Endothelial cell of umbilical vein (primary cell): ENCODE measurements at regions of chr12 and their contacts with region 1.

Region 1: DNA sequence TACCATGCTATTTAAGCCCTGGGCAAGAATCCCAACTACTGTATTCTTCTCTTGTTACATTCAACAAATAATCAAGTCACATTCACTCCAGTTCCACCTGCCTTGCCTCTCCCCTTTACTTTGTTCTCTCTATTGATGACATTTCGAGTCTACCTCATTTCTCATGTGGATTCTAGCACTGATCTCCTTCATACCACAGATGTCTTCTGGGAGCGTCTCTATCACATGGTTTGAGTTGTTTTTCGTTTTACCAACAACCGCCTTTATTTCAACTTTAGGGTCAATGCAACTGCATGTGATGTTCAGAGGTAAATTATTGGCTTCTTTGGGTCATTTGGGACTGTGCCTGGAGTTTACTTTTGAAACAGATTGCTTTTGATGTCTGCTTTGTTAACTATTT is 40.7 kb downstream of the OTOGL start:
- DNase-seq: no peak
- H3K4me3 ChIP-seq: no peak overlapping the region
- H3K27ac ChIP-seq: no peak overlapping the region
- H3K4me1 ChIP-seq: no peaks in the 10 kb centered on the region
- H3K27me3 ChIP-seq: peaks cover 0 to 5% of the 10 kb centered on the region in 2 experiments
- CTCF ChIP-seq: no peak
- POLR2A ChIP-seq: no peak

Region 2: DNA sequence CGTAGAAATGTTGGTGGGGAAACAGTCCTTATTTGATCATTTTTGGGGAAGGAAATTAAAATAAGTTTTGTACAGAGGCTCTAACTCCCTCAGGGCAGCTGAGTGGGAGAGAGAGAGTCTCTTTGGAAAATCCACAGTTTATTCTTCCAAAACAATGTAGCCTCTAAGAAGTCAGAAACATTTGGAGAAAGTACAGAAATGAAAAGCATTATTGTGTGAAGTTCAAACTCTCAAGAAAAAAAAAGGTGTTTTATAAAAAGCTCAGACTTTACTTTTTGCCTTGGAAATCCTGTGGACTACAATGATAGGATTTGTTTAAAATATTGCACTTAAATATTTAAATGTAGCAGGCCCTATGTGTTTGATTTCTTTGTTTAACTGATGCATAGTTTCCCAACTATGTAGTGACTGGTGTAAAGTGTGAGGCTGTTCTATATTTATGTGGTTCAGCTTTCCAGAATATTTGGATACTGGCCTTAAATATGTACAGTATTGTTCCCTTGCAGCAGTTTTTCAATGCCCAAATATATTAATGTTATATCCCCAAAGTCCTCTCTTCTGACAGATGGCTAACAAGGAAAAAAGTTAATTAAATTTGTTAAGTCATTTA is 122.6 kb before region 1 on chr12:
- CTCF ChIA-PET with region 1: no interaction called
- POLR2A ChIA-PET with region 1: no interaction called
- dilution Hi-C with region 1: no loop called
- intact Hi-C with region 1: no loop called
- DNase-seq: no peak
- H3K4me3 ChIP-seq: no peak overlapping the region
- H3K27ac ChIP-seq: no peak overlapping the region
- H3K4me1 ChIP-seq: no peaks in the 10 kb centered on the region
- H3K27me3 ChIP-seq: no peaks in the 10 kb centered on the region
- CTCF ChIP-seq: no peak
- POLR2A ChIP-seq: no peak

Region 3: DNA sequence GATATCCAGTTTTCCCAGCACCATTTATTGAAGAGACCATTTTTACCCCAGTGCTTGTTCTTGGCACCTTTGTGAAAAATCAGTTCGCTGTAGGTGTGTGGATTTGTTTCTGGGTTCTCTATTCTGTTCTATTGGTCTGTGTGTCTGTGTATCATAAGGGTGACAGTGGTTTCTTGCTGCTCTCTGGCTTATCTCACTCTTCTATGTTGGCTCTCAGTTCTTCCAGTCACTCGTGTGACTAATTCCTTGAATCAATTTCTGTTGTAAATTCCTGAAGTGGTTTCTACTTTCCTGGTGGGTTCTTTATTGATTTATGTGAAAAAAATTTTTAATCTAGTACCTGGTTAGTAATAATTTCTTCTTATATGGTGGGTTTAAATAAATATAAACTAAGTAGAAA is 17.6 kb after region 1 on chr12:
- CTCF ChIA-PET with region 1: no interaction called
- POLR2A ChIA-PET with region 1: no interaction called
- dilution Hi-C with region 1: no loop called
- intact Hi-C with region 1: no loop called
- DNase-seq: no peak
- H3K4me3 ChIP-seq: no peak overlapping the region
- H3K27ac ChIP-seq: no peak overlapping the region
- H3K4me1 ChIP-seq: no peaks in the 10 kb centered on the region
- H3K27me3 ChIP-seq: peaks cover 0 to 2% of the 10 kb centered on the region in 2 experiments
- CTCF ChIP-seq: no peak
- POLR2A ChIP-seq: no peak

Region 4: GRCh38 chr12:80168936-80169335 is 28.9 kb after region 1 on chr12:
- CTCF ChIA-PET with region 1: no interaction called
- POLR2A ChIA-PET with region 1: no interaction called
- dilution Hi-C with region 1: no loop called
- intact Hi-C with region 1: loop called (anchors 1 kb)
- DNase-seq: no peak
- H3K4me3 ChIP-seq: no peak overlapping the region
- H3K27ac ChIP-seq: no peak overlapping the region
- H3K4me1 ChIP-seq: peaks cover 6% of the 10 kb centered on the region
- H3K27me3 ChIP-seq: peaks cover 0 to 1% of the 10 kb centered on the region in 2 experiments
- CTCF ChIP-seq: no peak
- POLR2A ChIP-seq: no peak